GM12878 (cell line): ENCODE measurements at regions of chr6 and their contacts with region 1.

Region 1: GRCh38 chr6:106773484-106773913 is 144.1 kb downstream of the QRSL1 start:
- DNase-seq: no peak
- ATAC-seq: no peak
- H3K4me3 ChIP-seq: no peak overlapping the region
- H3K27ac ChIP-seq: no peak overlapping the region
- H3K4me1 ChIP-seq: no peaks in the 10 kb centered on the region
- H3K27me3 ChIP-seq: no peaks in the 10 kb centered on the region
- CTCF ChIP-seq: no peak
- EP300 ChIP-seq: no peak
- POLR2A ChIP-seq: no peak
- RAD21 ChIP-seq: no peak

Region 2: GRCh38 chr6:106797197-106797596 is 23.7 kb after region 1 on chr6:
- CTCF ChIA-PET with region 1: no interaction called
- POLR2A ChIA-PET with region 1: no interaction called
- RAD21 ChIA-PET with region 1: no interaction called
- SMC1A ChIA-PET with region 1: no interaction called
- in situ Hi-C with region 1: no loop called
- intact Hi-C with region 1: loop called (anchors 1 kb)
- DNase-seq: no peak
- ATAC-seq: no peak
- H3K4me3 ChIP-seq: no peak overlapping the region
- H3K27ac ChIP-seq: no peak overlapping the region
- H3K4me1 ChIP-seq: peaks cover 6% of the 10 kb centered on the region; the same call in 1 of the 2 replicates
- H3K27me3 ChIP-seq: no peaks in the 10 kb centered on the region
- CTCF ChIP-seq: no peak
- EP300 ChIP-seq: no peak
- POLR2A ChIP-seq: no peak
- RAD21 ChIP-seq: no peak

Region 3: DNA sequence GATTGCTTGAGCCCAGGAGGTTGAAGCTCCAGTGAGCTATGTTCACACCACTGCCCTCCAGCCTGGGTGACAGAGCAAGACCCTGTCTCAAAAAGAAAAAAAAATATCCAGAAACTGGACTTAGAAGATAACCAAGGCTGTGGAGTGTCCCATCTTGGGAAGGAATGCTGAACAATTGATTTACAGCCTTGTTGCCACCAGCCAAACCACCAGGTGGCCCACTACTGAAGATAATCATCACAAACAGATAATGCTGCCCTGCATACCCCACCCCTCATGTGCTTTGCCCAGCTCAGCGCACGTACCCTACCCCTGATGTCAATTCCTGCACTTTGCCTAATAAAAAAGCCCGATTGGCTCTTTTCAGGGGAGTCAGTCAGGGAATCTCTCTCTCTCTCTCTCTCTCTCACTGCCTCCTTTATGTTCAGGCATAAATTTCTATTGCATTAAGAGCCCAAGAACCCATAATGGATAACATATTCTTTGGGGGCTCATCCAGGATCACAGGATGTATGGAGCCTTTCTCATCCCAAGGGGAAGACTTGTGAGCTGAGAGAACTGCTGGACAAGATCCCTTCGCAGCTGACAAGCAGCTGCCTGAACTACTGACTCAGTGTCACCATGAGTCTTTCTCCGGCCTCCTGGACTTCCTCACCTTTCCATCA is 34.6 kb after region 1 on chr6:
- CTCF ChIA-PET with region 1: no interaction called
- POLR2A ChIA-PET with region 1: no interaction called
- RAD21 ChIA-PET with region 1: no interaction called
- SMC1A ChIA-PET with region 1: no interaction called
- in situ Hi-C with region 1: no loop called
- intact Hi-C with region 1: no loop called
- DNase-seq: no peak
- ATAC-seq: no peak
- H3K4me3 ChIP-seq: no peak overlapping the region
- H3K27ac ChIP-seq: no peak overlapping the region
- H3K4me1 ChIP-seq: no peaks in the 10 kb centered on the region
- H3K27me3 ChIP-seq: no peaks in the 10 kb centered on the region
- CTCF ChIP-seq: no peak
- EP300 ChIP-seq: no peak
- POLR2A ChIP-seq: no peak
- RAD21 ChIP-seq: no peak